GM18951 (cell line): ENCODE measurements at regions of chr20 and their contacts with region 1.

Region 1: DNA sequence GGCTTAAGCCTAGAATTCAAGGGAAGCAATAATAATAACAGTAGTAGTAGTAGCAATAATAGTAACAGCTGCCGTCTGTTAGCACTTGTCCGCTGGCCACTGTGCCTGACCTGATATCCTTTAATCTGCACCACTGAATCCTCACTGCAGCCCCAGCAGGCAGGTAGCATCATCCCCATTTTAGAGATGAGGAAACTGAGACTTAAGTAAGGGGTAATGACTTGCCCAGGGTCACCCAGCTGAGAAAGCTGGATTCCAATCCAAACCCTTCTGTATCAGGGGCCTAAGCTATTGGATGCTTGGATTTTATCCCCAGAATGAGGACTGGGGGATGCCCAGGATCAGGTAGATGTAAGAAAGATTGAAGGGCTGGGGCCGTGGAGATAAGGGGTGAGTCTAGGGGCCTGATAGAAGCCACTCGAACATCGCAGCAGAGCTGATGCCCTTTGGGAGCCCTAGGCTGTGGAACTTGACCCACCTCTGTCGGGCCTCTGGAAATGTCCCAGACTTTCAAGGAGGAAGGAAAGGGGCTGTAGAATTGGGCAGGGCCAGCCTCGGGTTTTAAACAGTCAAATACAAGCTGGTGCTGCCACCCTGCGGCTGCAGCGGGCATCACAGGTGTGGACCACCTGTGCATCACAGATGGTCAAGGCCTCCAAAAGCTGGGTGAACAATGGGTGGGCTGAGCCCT is 102.1 kb upstream of the MYL9 start:
- POLR2A ChIP-seq: no peak

Region 2: DNA sequence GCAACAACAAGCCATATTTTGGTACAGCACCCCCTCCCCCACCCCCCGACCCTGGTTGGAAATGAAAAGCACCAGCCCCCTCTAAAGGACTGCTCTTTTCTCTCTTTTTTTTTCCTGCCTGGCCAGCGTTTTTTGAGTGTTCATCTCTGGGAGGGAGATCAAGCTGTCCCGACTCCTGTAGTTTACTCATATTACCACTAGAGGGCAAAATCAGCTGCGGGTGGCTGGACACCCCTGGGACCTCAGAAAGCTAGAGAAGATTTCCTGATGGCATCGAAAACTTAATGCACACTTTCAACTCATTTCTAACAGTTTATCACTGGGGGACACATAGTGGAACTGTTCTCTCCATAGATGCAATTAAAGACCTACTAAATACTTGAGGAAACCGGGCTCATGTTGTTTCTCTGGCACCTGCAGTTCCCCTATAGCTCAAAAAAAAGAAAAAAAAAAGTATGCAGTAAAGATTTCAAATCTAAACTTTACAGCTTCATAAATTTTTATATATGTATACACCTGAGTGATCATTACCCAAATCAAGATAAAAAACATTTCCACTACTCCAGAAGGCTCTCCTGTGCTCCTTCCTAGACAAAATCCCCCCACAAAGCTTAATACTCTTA is 446.4 kb before region 1 on chr20:
- in situ Hi-C with region 1: no loop called
- POLR2A ChIP-seq: no peak

Region 3: DNA sequence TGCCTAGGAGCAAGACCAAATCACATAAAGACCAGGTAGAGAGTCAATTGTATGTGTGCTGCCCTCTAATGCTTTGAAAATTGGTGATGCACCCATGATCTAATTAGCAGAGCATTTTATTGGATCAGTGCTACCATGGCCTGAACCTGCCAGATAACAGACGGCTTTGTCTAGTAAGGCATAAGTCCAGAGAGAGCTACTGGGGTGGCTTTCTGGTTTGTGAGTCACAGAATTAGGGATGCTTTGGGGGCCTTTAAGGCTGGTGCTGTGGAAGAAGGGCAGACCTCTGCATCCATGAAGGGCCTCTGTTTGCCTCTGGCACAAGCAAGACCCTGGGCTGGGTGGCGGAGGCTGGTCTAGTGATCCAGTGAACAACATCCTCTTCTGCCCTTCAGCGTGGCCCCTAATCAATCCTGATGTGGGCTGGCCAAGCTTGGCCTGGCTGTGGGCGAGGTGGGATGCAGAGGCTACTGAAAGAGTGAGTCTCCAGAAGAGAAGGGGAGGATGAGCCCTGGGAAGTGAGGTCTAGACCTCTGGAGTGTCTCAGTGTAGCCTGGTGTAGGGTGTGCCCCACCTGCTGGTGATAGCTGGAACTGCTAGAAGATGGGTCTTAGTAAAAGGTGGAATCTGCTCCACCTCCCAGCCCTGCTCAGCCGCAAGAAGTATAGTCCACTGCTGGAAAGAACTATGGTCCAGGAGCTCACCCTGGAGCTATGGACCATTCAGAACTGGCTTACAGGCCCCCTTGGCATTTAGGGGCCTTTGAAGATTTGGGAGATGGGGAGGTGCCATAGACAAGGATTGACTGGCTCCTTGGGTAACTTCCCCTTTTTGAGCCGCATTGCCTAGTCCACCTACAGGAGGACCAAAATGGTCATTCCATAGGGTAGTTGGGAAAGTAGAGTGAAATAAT is 239.6 kb before region 1 on chr20:
- in situ Hi-C with region 1: loop called (anchors 10 kb)
- POLR2A ChIP-seq: no peak